K562 (cell line): ENCODE measurements at regions of chr9 and their contacts with region 1.

Region 1: GRCh38 chr9:73149371-73150067 is 2.1 kb upstream of the ANXA1 start:
- DNase-seq: peak; percentile 44 to 69 (median 48)
- ATAC-seq: peak; percentile 43
- H3K4me3 ChIP-seq: no peak overlapping the region
- H3K27ac ChIP-seq: peak overlapping the region; percentile 90
- H3K4me1 ChIP-seq: peaks cover 8 to 45% of the 10 kb centered on the region in 2 experiments; a peak in 4 of 5 replicates
- H3K27me3 ChIP-seq: no peaks in the 10 kb centered on the region
- CTCF ChIP-seq: no peak
- EP300 ChIP-seq: peak; percentile 70; the same call in 1 of the 2 replicates
- POLR2A ChIP-seq: no peak
- RAD21 ChIP-seq: no peak

Region 2: GRCh38 chr9:73034962-73035361 is 114.6 kb before region 1 on chr9:
- CTCF ChIA-PET with region 1: no interaction called
- POLR2A ChIA-PET with region 1: interaction called, 4 read pairs
- in situ Hi-C with region 1: no loop called
- intact Hi-C with region 1: loop called (anchors 1 kb)
- DNase-seq: no peak
- ATAC-seq: no peak
- H3K4me3 ChIP-seq: no peak overlapping the region
- H3K27ac ChIP-seq: no peak overlapping the region
- H3K4me1 ChIP-seq: peaks cover 4 to 31% of the 10 kb centered on the region in 2 experiments; a peak in 4 of 5 replicates
- H3K27me3 ChIP-seq: no peaks in the 10 kb centered on the region
- CTCF ChIP-seq: peak in 1 of 3 experiments; percentile 6; a peak in 1 of 6 replicates
- EP300 ChIP-seq: no peak
- POLR2A ChIP-seq: no peak
- RAD21 ChIP-seq: no peak

Region 3: DNA sequence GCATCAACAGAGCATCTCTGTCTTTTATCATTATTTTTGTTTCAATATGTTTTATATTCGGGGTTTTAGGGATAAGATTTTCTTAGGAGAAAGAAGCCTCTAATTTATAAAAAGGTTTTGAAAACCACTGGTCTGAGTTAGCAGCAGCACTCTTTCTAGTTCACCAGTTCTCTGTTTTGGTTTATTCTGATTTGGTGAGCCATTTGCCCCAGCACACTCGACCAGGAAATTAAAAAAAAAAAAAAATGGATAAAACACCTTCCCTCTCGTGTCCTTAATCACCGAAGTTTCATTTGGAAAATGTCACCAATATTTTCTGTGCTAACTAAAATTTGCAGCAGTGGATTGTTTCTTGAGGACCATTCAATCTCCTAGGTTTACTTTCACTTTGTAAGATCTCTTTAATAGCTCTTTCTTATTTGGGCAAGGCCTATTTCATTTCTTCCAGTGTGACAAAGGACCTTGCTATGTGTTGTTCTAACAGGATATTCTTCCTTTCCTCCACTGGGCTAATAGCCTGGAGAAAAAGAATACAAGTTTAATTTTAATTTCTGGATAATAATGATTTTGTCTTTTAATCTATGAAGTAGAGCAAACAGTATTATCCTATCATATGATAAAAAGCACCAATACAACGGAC is 55.7 kb before region 1 on chr9:
- CTCF ChIA-PET with region 1: no interaction called
- POLR2A ChIA-PET with region 1: no interaction called
- in situ Hi-C with region 1: no loop called
- intact Hi-C with region 1: no loop called
- DNase-seq: no peak
- ATAC-seq: peak; percentile 50; the same call in 2 of the 3 replicates
- H3K4me3 ChIP-seq: no peak overlapping the region
- H3K27ac ChIP-seq: no peak overlapping the region
- H3K4me1 ChIP-seq: no peaks in the 10 kb centered on the region
- H3K27me3 ChIP-seq: no peaks in the 10 kb centered on the region
- CTCF ChIP-seq: no peak
- EP300 ChIP-seq: no peak
- POLR2A ChIP-seq: no peak
- RAD21 ChIP-seq: no peak

Region 4: GRCh38 chr9:73104342-73104741 is 45.2 kb before region 1 on chr9:
- CTCF ChIA-PET with region 1: no interaction called
- POLR2A ChIA-PET with region 1: no interaction called
- in situ Hi-C with region 1: no loop called
- intact Hi-C with region 1: loop called (anchors 2 kb)
- DNase-seq: no peak
- ATAC-seq: no peak; the same call in 2 of the 3 replicates
- H3K4me3 ChIP-seq: no peak overlapping the region
- H3K27ac ChIP-seq: no peak overlapping the region
- H3K4me1 ChIP-seq: no peaks in the 10 kb centered on the region
- H3K27me3 ChIP-seq: no peaks in the 10 kb centered on the region
- CTCF ChIP-seq: no peak
- EP300 ChIP-seq: no peak
- POLR2A ChIP-seq: no peak
- RAD21 ChIP-seq: no peak

Region 5: GRCh38 chr9:73132034-73132776 is 17.3 kb before region 1 on chr9:
- CTCF ChIA-PET with region 1: no interaction called
- POLR2A ChIA-PET with region 1: interaction called, 11 read pairs
- in situ Hi-C with region 1: no loop called
- intact Hi-C with region 1: loop called (anchors 1 kb)
- DNase-seq: peak in 2 of 4 experiments; percentile 29 to 70
- ATAC-seq: peak; percentile 82
- H3K4me3 ChIP-seq: peak overlapping the region; percentile 33
- H3K27ac ChIP-seq: peak overlapping the region; percentile 85
- H3K4me1 ChIP-seq: peaks cover 0 to 25% of the 10 kb centered on the region in 2 experiments; a peak in 3 of 5 replicates
- H3K27me3 ChIP-seq: no peaks in the 10 kb centered on the region
- CTCF ChIP-seq: no peak
- EP300 ChIP-seq: no peak
- POLR2A ChIP-seq: peak; percentile 57
- RAD21 ChIP-seq: no peak

Region 6: GRCh38 chr9:73179589-73179988 is 30.1 kb after region 1 on chr9:
- CTCF ChIA-PET with region 1: no interaction called
- POLR2A ChIA-PET with region 1: no interaction called
- in situ Hi-C with region 1: no loop called
- intact Hi-C with region 1: no loop called
- DNase-seq: no peak
- ATAC-seq: no peak
- H3K4me3 ChIP-seq: no peak overlapping the region
- H3K27ac ChIP-seq: no peak overlapping the region
- H3K4me1 ChIP-seq: no peaks in the 10 kb centered on the region
- H3K27me3 ChIP-seq: no peaks in the 10 kb centered on the region
- CTCF ChIP-seq: no peak
- EP300 ChIP-seq: no peak
- POLR2A ChIP-seq: no peak
- RAD21 ChIP-seq: no peak

Region 7: DNA sequence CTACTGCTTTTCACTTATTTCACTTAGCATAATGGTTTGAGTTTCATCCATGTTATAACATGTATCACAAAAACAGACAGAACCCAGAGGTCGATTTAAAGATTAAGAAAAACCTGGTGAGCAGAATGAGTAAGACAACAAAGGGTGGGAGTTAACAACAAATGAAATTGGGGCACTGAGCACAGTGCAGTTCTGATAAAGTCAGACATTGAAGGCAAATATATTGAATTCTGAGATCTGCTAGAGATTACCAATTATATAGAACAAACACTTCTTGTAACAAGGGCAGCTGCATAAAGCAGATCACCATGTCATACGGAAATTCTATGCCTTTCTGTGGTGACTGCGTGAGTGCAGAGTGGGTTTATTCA is 830.4 kb after region 1 on chr9:
- CTCF ChIA-PET with region 1: no interaction called
- POLR2A ChIA-PET with region 1: no interaction called
- in situ Hi-C with region 1: no loop called
- intact Hi-C with region 1: loop called (anchors 5 kb)
- DNase-seq: peak in 2 of 4 experiments; percentile 3 to 26
- ATAC-seq: peak; percentile 47
- H3K4me3 ChIP-seq: peak overlapping the region; percentile 48
- H3K27ac ChIP-seq: peak overlapping the region; percentile 94
- H3K4me1 ChIP-seq: no peaks in the 10 kb centered on the region
- H3K27me3 ChIP-seq: no peaks in the 10 kb centered on the region
- CTCF ChIP-seq: no peak
- EP300 ChIP-seq: no peak
- POLR2A ChIP-seq: no peak
- RAD21 ChIP-seq: no peak